Calu3 (cell line): ENCODE measurements at regions of chr3 and their contacts with region 1.

Region 1: DNA sequence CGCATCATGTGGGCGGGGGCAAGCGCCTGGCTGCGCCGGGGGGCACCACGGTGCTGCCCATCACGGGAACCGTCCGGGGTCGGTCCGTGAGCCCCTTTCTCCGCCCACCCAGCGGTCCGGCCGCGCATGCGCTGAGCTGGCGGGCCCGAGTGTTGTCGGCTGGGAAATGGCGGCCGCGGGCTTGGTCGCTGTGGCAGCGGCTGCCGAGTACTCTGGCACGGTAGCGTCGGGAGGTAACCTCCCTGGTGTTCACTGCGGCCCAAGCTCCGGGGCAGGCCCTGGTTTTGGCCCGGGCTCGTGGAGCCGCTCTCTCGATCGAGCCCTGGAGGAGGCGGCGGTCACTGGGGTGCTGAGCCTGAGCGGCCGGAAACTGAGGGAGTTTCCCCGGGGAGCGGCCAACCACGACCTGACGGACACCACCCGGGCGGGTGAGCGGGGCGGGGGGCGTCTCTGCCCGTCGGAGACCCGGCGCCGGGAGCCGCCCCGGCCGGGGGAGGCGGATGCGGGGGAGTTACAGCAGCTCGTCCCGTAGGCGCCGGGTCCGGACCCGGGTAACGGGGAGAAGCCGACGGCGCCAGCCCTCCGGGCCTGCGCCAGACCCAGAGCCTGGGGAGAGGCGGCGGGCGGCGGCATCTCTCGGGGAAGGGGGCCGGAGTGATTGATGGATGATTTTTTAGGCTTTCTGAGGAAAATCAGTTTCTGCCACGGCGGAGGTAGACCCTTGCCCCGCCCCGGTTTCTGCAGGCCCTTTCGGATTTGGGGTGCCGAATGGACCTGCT is at the start of gene LRCH3:
- DNase-seq: peak; percentile 83
- H3K4me3 Mint-ChIP-seq: peak within 1 kb of the TSS; percentile 83
- H3K27ac Mint-ChIP-seq: peak within 1 kb of the TSS; percentile 55
- H3K4me1 Mint-ChIP-seq: peaks cover 10% of the 10 kb centered on the region
- H3K27me3 Mint-ChIP-seq: no peaks in the 10 kb centered on the region
- CTCF ChIP-seq: no peak
- total RNA-seq, gene LRCH3: 39.4 and 44.6 TPM in 2 replicates

Region 2: DNA sequence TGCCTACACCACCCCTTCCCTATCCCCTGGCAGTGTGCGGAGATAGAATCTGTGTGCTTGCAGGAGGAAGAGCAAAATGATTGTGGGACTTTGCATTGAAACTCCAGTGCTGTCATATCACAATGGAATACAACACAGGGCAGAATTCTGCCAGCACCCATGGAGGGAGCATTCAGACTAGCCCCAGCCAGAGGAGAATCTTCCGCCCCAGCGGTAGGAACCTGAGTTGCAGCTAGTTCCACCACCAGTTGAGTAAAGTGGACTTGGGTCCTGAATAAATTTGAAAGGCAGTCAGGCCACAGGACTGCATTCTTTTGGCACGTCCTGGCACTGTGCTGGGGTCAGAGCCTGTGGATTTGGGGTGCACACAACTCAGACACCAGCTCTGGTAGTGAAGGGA is 876.4 kb before region 1 on chr3:
- CTCF ChIA-PET with region 1: no interaction called
- intact Hi-C with region 1: no loop called
- DNase-seq: no peak
- H3K4me3 Mint-ChIP-seq: no peak overlapping the region
- H3K27ac Mint-ChIP-seq: no peak overlapping the region
- H3K4me1 Mint-ChIP-seq: no peaks in the 10 kb centered on the region
- H3K27me3 Mint-ChIP-seq: no peaks in the 10 kb centered on the region
- CTCF ChIP-seq: no peak

Region 3: GRCh38 chr3:197682713-197683112 is 108.6 kb before region 1 on chr3:
- CTCF ChIA-PET with region 1: interaction called, 10 read pairs
- intact Hi-C with region 1: no loop called
- DNase-seq: no peak
- H3K4me3 Mint-ChIP-seq: no peak overlapping the region
- H3K27ac Mint-ChIP-seq: no peak overlapping the region
- H3K4me1 Mint-ChIP-seq: no peaks in the 10 kb centered on the region
- H3K27me3 Mint-ChIP-seq: no peaks in the 10 kb centered on the region
- CTCF ChIP-seq: no peak

Region 4: GRCh38 chr3:197711973-197712707 is 79.2 kb before region 1 on chr3:
- CTCF ChIA-PET with region 1: no interaction called
- intact Hi-C with region 1: loop called (anchors 5 kb)
- DNase-seq: peak; percentile 81
- H3K4me3 Mint-ChIP-seq: peak overlapping the region; percentile 50
- H3K27ac Mint-ChIP-seq: peak overlapping the region; percentile 91
- H3K4me1 Mint-ChIP-seq: peaks cover 9% of the 10 kb centered on the region
- H3K27me3 Mint-ChIP-seq: no peaks in the 10 kb centered on the region
- CTCF ChIP-seq: no peak